Prostate gland (tissue), 2 donors: ENCODE measurements at regions of chrX and their contacts with region 1.

Region 1: GRCh38 chrX:65706041-65706828 is 38.8 kb downstream of the MSN start:
- DNase-seq: no peak
- H3K4me3 ChIP-seq: no peak overlapping the region
- H3K27ac ChIP-seq: no peak overlapping the region
- H3K4me1 ChIP-seq: no peaks in the 10 kb centered on the region
- H3K27me3 ChIP-seq: no peaks in the 10 kb centered on the region
- CTCF ChIP-seq: no peak
- POLR2A ChIP-seq: no peak

Region 2: GRCh38 chrX:65581661-65582339 is 124.4 kb before region 1 on chrX:
- intact Hi-C with region 1: no loop called
- DNase-seq: peak; percentile 32
- H3K4me3 ChIP-seq: no peak overlapping the region
- H3K27ac ChIP-seq: no peak overlapping the region
- H3K4me1 ChIP-seq: no peaks in the 10 kb centered on the region
- H3K27me3 ChIP-seq: no peaks in the 10 kb centered on the region
- CTCF ChIP-seq: peak in 3 of 4 experiments; percentile 63 to 72 (median 71)
- POLR2A ChIP-seq: no peak

Region 3: DNA sequence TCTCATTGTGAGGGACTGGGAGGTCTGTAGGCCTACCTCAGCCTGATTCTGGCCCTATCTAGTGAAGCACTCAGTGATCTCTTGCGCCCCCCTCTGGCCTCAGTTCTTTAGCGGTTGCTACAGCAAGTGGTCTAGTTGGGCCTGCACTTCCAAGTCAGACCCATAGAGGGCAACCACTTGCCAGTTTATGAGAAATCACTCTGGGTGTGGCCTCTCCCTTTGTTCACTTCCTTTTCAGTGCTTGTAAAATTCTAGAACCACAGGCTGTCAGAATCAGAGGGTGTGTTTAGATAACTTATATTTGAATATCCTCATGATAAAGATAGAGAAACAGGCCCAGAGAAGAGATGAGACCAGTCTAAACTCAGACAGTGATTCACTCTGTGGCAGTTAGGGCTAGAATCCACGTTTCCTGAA is 110.8 kb before region 1 on chrX:
- intact Hi-C with region 1: loop called (anchors 5 kb)
- DNase-seq: peak; percentile 88
- H3K4me3 ChIP-seq: no peak overlapping the region
- H3K27ac ChIP-seq: peak overlapping the region; percentile 57 to 66
- H3K4me1 ChIP-seq: no peaks in the 10 kb centered on the region
- H3K27me3 ChIP-seq: no peaks in the 10 kb centered on the region
- CTCF ChIP-seq: peak; percentile 77 to 96 (median 90)
- POLR2A ChIP-seq: no peak

Region 4: DNA sequence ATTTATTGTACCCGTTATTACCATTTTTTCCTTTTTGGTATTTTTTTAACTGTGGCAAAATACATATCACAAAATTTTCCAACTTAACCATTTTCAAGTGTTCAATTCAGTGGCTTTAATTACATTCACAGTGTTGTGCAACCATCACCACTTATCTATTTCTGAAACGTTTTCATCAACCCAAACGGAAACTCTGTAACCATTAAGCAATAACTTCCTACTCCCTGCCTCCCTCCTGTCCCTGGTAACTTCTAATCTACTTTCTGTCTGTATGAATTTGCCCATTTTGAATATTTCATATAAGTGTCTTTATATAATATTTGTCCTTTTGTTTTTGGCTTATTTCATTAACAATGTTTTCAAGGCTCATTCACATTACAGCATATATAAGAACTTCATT is 96.2 kb before region 1 on chrX:
- intact Hi-C with region 1: no loop called
- DNase-seq: no peak
- H3K4me3 ChIP-seq: no peak overlapping the region
- H3K27ac ChIP-seq: no peak overlapping the region
- H3K4me1 ChIP-seq: no peaks in the 10 kb centered on the region
- H3K27me3 ChIP-seq: no peaks in the 10 kb centered on the region
- CTCF ChIP-seq: no peak
- POLR2A ChIP-seq: no peak

Region 5: DNA sequence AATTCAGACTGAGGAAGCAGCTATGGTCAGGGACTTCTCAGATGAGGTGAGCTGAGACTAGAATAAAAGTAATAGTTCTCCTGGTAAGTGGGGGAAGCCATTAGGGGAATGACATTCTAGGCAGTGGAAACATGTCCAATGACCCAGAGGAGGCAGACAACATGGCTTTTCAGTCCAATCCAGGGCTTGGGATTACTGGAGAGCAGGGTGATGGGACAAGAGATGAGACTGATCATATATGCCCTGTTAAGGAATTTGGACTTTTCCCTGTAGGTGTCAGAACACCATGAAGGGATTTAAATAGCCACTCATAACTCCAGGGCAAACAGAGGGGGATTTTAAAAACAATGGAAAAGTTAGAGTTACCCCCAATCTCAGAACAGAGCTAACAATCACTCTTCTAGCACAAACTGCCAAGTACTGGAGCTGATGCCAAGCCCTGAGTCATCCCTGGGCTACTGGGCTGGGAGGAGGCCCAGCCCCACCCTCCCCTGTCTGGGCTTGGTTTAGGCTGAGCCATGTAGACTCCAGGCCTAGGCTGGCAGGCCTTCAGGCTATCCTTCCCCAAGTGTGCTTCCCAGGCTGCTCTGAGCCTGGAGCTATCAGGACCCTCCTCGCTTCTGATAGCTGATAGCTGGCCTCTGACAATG is 61.5 kb before region 1 on chrX:
- intact Hi-C with region 1: loop called (anchors 10 kb)
- DNase-seq: peak; percentile 75
- H3K4me3 ChIP-seq: no peak overlapping the region
- H3K27ac ChIP-seq: peak overlapping the region; percentile 38 to 39
- H3K4me1 ChIP-seq: no peaks in the 10 kb centered on the region
- H3K27me3 ChIP-seq: no peaks in the 10 kb centered on the region
- CTCF ChIP-seq: no peak
- POLR2A ChIP-seq: no peak